Right cardiac atrium (tissue), 5 donors: ENCODE measurements at regions of chr14 and their contacts with region 1.

Region 1: DNA sequence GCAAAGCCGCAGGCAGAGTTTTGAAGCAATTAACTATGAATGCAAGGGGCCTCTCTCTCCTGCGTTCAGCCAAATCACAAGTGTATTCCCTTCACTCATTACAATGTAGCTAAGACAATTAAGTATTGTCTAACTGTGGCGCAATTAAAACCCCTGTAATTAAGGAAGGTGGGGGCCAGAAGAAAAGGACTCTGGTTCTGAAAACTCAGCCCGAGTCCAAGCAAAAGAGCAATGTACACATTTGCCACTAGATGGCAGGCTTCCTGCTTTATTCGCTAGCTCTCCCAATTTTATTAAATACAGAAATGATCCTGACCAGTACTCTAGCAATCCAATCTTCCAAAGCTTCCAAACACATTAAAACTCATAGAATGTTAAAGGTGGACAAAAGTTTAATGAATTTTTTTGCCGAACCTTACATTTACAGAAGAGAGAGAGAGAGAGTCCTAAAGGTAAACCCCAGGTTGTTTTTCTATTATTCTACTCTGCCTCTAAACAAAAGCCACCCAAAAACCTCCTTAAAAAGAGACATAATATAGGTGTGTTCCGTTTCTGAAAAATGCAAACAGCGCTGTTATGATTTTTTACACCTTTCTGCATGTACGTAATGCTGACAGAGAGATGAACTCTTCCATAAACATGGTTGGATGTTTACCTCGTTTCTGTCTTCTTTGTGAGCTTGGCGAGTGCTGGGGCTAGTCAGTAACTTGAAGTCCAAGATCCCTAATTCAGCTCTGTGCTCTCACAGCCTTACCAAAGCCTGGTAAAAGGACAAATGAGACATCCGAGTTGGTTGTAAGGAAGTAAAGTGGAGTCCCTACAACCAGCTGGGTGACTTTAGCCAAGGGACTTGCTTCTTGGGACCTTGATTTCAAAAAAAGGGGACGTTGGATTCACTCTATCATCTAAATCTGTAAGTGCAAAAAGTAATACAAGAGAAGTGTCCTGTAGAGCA is 50.9 kb upstream of the VASH1 start:
- DNase-seq: no peak
- ATAC-seq: peak; percentile 36 to 63
- H3K4me3 ChIP-seq: no peak overlapping the region
- H3K27ac ChIP-seq: no peak overlapping the region
- H3K4me1 ChIP-seq: no peaks in the 10 kb centered on the region
- H3K27me3 ChIP-seq: no peaks in the 10 kb centered on the region

Region 2: DNA sequence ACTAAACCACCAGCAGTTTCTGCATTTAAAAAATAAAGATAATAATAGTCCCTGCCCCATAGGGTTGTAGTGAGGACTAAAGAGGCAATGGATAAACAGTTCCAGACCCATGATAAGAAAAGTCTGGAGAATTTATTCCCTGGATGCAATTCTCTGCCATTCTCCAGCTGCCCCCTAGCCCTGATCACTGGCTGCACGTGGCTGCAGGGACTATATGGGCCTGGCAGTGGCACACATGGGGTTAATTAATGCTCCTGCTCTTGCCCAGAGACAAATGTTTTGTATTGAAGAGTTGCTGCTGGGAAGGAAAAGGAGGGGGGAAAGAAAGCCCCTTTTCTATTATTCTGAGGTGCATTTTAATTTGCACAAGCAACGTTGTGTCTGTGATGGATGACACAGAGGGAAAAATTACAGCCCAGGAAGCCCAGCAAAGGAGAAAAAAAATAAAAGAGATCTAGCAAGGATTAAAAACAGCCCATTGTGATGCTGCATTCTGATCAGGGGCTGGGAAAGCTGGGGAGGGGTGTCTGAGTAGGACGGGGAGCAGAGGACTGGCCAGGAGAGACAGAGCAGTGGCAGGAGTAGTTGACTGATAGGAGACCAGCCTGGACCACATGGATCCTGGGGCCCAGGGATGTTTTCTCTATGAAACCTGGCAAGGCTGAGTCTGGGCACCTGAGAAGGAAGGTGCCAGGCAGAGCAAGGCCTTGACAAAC is 185.1 kb before region 1 on chr14:
- intact Hi-C with region 1: no loop called
- DNase-seq: no peak
- ATAC-seq: no peak
- H3K4me3 ChIP-seq: no peak overlapping the region
- H3K27ac ChIP-seq: no peak overlapping the region
- H3K4me1 ChIP-seq: no peaks in the 10 kb centered on the region
- H3K27me3 ChIP-seq: no peaks in the 10 kb centered on the region

Region 3: DNA sequence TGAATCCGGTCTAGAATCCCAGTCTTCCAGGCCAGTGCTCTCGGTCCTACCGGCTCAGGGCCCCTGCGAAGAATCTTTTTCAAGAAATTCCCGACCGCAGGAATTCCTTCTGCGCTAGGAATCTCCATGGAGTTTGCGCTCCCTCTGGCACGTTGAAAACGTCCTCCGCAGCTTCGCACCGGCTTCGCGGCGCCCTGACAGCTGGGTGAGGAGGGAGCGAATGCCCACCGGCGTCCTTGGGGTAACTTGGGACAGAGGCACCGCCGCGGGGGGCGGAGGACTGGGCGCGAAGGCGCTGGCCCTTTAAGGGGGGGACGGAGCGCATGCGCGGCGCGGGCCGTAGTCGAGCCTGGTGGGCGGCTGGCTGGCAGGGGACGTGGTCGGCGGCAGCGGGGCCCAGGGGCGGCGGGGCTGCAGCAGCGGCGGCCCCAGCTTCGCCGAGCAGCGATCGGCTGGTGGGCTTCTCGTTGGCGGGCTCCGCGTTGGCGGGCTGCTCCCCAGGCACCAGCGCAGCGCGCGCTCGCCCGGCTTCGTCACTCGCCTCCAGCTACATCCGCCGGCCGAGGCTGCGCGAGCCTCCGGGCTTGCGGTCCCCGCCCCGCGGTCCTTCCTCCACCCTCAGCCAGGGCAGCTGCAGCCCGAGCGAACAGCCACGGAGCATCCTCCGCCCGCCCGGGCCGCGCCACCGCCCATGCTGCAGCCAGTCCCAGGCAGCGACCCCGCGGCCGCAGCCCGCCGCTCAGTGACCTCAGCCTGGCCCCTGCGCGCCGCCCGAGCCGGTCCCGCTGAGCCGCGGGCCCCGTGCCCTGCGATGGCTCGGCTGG is 51.0 kb after region 1 on chr14 and contains the start of gene VASH1:
- intact Hi-C with region 1: loop called in 1 of 4 experiments (anchors 5 kb)
- DNase-seq: peak; percentile 84 to 94 (median 94)
- ATAC-seq: peak; percentile 74 to 76
- H3K4me3 ChIP-seq: peak within 1 kb of the TSS; percentile 70
- H3K27ac ChIP-seq: peak within 1 kb of the TSS; percentile 84
- H3K4me1 ChIP-seq: no peaks in the 10 kb centered on the region
- H3K27me3 ChIP-seq: no peaks in the 10 kb centered on the region
- total RNA-seq, gene VASH1: 27.6 to 85.2 (median 37.5) TPM

Region 4: GRCh38 chr14:76784266-76785264 is 74.2 kb after region 1 on chr14:
- intact Hi-C with region 1: loop called (anchors 2 to 5 kb)
- DNase-seq: peak; percentile 85 to 95 (median 93)
- ATAC-seq: peak; percentile 89 to 91
- H3K4me3 ChIP-seq: no peak overlapping the region
- H3K27ac ChIP-seq: peak overlapping the region; percentile 9
- H3K4me1 ChIP-seq: peaks cover 8% of the 10 kb centered on the region
- H3K27me3 ChIP-seq: no peaks in the 10 kb centered on the region